ENCODE measurements at regions of chr11 and their contacts with region 1.

Region 1: DNA sequence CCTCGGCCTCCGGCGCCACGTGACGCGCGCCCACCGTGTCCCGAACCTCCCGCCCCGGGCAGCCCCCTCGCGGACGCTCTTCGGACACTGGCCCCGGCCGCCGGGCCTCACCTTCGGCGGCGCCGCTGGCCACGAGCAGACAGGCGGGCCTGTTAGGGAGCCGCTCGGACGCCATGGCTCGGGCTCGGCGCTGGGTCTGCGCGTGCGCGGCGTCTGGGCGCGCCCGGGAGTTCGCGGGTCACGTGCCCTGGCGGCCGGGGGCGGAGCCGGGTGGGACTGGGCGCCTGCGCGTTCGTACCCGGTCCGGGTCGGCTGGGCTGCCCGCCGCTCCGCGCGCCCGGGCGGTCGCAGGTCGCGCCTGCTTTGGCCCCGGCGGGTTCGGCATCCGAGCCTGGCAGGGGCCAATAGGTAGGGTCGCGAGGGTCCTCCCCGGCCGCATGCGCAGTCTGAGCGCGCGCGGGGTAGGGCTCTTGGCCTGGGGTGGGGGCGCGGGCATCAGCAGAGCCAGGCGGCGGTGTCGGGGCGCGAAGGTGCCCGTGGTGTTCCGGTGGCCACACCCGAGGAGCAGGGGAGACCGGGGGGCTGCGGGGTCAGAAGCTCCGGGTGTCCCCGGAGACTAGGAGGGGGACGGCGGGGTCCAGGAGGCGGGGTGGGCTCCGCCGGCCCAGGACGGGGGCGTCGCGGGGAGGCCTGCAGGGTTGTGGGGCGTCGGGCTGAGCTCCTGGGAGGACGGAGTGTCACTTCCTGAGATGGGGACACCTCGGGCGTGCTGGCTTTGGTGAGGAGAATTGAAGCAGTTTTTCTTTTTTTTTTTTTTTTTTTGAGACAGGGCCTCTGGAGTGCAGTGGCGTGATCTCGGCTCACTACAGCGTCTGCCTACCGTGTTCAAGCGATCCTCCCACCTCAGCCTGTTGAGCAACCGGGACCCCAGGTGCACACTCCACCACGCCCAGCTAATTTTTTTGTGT is at the start of gene GATD1:
- DNase-seq: peak; percentile 94
- ATAC-seq: peak; percentile 71
- H3K4me3 Mint-ChIP-seq: peak within 1 kb of the TSS; percentile 88
- H3K27ac Mint-ChIP-seq: peak within 1 kb of the TSS; percentile 83
- H3K4me1 Mint-ChIP-seq: peaks cover 25% of the 10 kb centered on the region
- H3K27me3 Mint-ChIP-seq: no peaks in the 10 kb centered on the region
- CTCF ChIP-seq: no peak
- total RNA-seq, gene GATD1: 81.9 to 87.6 TPM (median 87.5 TPM) in 3 replicates

Region 2: DNA sequence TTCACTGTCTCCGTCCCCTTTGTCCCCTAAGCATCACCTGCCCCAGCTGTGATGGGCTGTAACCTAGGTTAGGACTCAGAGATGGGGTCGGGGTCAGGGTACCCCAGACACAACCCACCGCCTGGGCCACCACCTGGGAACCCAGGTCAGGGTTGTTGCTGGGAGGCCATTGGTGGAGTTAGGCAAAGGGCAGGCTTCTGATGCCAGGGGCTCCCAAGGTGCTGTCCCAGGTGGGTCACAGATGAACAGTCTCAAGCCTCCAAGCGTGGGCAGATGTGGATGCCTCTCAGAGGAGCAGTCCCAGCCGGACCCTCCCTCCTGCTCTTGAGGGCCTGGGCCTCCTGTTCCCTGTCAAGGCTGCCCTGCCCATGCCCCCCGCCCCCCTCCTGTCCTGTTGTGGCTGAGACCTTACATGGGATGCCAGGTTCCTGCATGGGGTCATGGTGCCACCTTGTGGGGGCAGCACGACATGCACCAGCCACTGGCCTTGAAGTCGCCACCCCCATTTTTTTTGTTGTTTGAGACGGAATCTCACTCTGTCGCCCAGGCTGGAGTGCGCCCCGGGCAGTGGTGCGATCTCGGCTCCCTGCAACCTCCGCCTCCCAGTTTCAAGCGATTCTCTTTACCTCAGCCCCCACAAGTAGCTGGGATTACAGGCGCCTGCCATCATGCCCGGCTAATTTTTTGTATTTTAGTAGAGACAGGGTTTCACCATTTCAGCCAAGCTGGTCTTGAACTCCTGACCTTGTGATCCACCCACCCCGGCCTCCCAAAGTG is 12.4 kb before region 1 on chr11:
- CTCF ChIA-PET with region 1: interaction called, 9 read pairs
- POLR2A ChIA-PET with region 1: interaction called, 10 read pairs
- DNase-seq: peak; percentile 82
- ATAC-seq: peak; percentile 57
- H3K4me3 Mint-ChIP-seq: no peak overlapping the region
- H3K27ac Mint-ChIP-seq: no peak overlapping the region; the same call in 1 of the 2 replicates
- H3K4me1 Mint-ChIP-seq: peaks cover 12% of the 10 kb centered on the region
- H3K27me3 Mint-ChIP-seq: no peaks in the 10 kb centered on the region
- CTCF ChIP-seq: peak; percentile 50

Region 3: GRCh38 chr11:789943-790342 is 12.4 kb after region 1 on chr11 and contains the start of gene CEND1:
- CTCF ChIA-PET with region 1: interaction called, 5 read pairs
- POLR2A ChIA-PET with region 1: interaction called, 10 read pairs
- DNase-seq: peak; percentile 62
- ATAC-seq: peak; percentile 13
- H3K4me3 Mint-ChIP-seq: no peak within 1 kb of the TSS; the same call in 1 of the 2 replicates
- H3K27ac Mint-ChIP-seq: no peak within 1 kb of the TSS
- H3K4me1 Mint-ChIP-seq: peaks cover 9% of the 10 kb centered on the region; the same call in 1 of the 2 replicates
- H3K27me3 Mint-ChIP-seq: no peaks in the 10 kb centered on the region
- CTCF ChIP-seq: no peak
- total RNA-seq, gene CEND1: 2.0 to 3.1 TPM (median 2.7 TPM) in 3 replicates

Region 4: DNA sequence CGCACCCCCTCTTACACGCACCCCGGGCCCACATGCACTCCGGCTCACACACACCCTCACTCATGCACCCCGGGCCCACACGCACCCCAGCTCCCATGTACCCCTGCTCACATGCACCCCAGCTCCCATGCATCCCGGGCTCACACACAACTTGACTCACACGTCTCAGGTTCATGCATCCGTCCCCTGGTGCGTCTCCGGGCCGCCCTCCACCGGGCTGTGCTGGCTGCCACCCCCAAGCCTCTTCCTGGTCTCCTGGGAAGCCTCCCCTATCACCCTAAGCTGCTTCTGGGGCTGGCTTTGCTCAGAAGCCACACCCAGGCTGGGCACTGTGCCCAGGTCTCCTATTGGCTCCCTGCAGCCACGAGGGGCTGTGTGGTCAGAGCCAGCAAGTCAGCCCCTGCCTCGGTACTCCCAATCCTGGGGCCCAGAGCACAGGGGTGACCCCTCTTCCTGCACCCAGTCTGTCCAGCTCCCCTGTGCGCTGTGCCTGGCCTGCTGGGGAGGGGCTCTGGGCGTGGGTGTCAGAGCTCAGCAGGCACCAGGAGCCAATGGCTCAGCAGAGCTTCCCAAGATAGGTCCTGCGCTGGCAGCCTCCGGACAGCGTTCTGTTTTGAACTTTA is 82.0 kb after region 1 on chr11:
- CTCF ChIA-PET with region 1: no interaction called
- POLR2A ChIA-PET with region 1: no interaction called
- DNase-seq: no peak
- ATAC-seq: no peak
- H3K4me3 Mint-ChIP-seq: no peak overlapping the region
- H3K27ac Mint-ChIP-seq: no peak overlapping the region
- H3K4me1 Mint-ChIP-seq: peaks cover 40% of the 10 kb centered on the region
- H3K27me3 Mint-ChIP-seq: peaks cover 3% of the 10 kb centered on the region; the same call in 1 of the 2 replicates
- CTCF ChIP-seq: no peak

Region 5: GRCh38 chr11:876519-876918 is 98.9 kb after region 1 on chr11:
- CTCF ChIA-PET with region 1: no interaction called
- POLR2A ChIA-PET with region 1: no interaction called
- DNase-seq: no peak
- ATAC-seq: no peak
- H3K4me3 Mint-ChIP-seq: no peak overlapping the region
- H3K27ac Mint-ChIP-seq: no peak overlapping the region
- H3K4me1 Mint-ChIP-seq: no peaks in the 10 kb centered on the region
- H3K27me3 Mint-ChIP-seq: peaks cover 3% of the 10 kb centered on the region
- CTCF ChIP-seq: no peak

Measured in WTC11 (cell line).